Heart left ventricle (tissue), 16 donors: ENCODE measurements at regions of chr12 and their contacts with region 1.

Region 1: GRCh38 chr12:94074980-94075928 is 73.1 kb upstream of the PLXNC1 start:
- DNase-seq: peak in 4 of 5 donors; percentile 73 to 80 (median 77)
- ATAC-seq: peak; percentile 76 to 90 (median 84)
- H3K4me3 ChIP-seq: peak overlapping the region in 6 of 12 donors; percentile 4 to 36 (median 10)
- H3K27ac ChIP-seq: peak overlapping the region; percentile 74 to 96 (median 84)
- H3K4me1 ChIP-seq: peaks cover 0 to 36% (median 23%) of the 10 kb centered on the region in 12 donors
- H3K27me3 ChIP-seq: no peaks in the 10 kb centered on the region
- CTCF ChIP-seq: peak; percentile 59 to 88 (median 69)
- POLR2A ChIP-seq: no peak

Region 2: GRCh38 chr12:93064630-93065029 is 1010.6 kb before region 1 on chr12:
- intact Hi-C with region 1: no loop called
- DNase-seq: no peak
- ATAC-seq: no peak
- H3K4me3 ChIP-seq: no peak overlapping the region
- H3K27ac ChIP-seq: no peak overlapping the region
- H3K4me1 ChIP-seq: peaks cover 0 to 38% (median 23%) of the 10 kb centered on the region in 12 donors
- H3K27me3 ChIP-seq: no peaks in the 10 kb centered on the region
- CTCF ChIP-seq: no peak
- POLR2A ChIP-seq: no peak

Region 3: GRCh38 chr12:93677195-93678064 is 397.8 kb before region 1 on chr12 and contains the start of gene CRADD:
- intact Hi-C with region 1: loop called in 5 of 10 experiments (anchors 5 to 10 kb)
- DNase-seq: peak; percentile 79 to 90 (median 83)
- ATAC-seq: peak; percentile 86 to 94 (median 92)
- H3K4me3 ChIP-seq: peak within 1 kb of the TSS; percentile 36 to 84 (median 70)
- H3K27ac ChIP-seq: peak within 1 kb of the TSS; percentile 84 to 100 (median 97)
- H3K4me1 ChIP-seq: peaks cover 0 to 52% (median 24%) of the 10 kb centered on the region in 12 donors
- H3K27me3 ChIP-seq: no peaks in the 10 kb centered on the region
- CTCF ChIP-seq: no peak
- POLR2A ChIP-seq: peak in 1 of 2 donors; percentile 73
- total RNA-seq, gene CRADD: 40.1 to 100 (median 56.1) TPM

Region 4: DNA sequence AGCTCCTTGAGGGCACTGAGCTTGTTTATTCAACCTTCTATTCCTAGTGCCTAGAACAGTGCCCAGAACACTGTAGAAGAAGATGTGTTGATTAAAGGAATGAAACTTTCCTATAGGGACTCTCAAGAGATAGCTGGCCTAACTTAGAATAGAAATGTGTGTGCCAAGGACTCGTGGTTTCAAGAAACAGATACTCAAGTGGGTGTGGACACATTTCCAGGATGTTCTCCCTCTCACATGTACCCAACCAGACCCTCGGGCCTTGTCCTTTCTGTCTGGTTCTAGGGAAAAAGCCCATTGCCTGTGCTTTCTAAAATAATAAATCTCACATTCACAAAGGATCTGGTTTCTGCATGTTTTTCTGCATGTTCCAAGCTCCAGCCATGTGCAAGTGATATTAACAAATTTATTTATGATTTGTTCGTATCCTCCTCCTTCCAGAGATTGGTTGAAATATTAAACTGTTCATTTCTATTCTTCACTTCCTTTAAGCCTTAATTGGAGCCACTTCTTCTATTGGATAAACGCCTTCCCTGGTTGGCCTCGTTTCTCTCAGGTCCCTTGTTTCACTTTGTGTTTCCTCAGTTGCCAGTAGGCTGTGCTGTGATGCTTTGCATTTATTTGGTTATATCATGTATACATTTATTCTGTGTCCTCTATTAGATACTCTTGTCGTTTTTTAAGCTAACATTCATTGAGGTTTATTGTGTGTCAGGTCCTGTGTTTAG is 308.3 kb before region 1 on chr12:
- intact Hi-C with region 1: loop called in 7 of 10 experiments (anchors 2 to 10 kb)
- DNase-seq: peak in 4 of 5 donors; percentile 37 to 60 (median 50)
- ATAC-seq: peak; percentile 79 to 88 (median 82)
- H3K4me3 ChIP-seq: peak overlapping the region in 1 of 12 donors; percentile 5
- H3K27ac ChIP-seq: peak overlapping the region; percentile 27 to 72 (median 55)
- H3K4me1 ChIP-seq: peaks cover 0 to 56% (median 42%) of the 10 kb centered on the region in 12 donors
- H3K27me3 ChIP-seq: no peaks in the 10 kb centered on the region
- CTCF ChIP-seq: peak; percentile 38 to 81 (median 64)
- POLR2A ChIP-seq: no peak

Region 5: DNA sequence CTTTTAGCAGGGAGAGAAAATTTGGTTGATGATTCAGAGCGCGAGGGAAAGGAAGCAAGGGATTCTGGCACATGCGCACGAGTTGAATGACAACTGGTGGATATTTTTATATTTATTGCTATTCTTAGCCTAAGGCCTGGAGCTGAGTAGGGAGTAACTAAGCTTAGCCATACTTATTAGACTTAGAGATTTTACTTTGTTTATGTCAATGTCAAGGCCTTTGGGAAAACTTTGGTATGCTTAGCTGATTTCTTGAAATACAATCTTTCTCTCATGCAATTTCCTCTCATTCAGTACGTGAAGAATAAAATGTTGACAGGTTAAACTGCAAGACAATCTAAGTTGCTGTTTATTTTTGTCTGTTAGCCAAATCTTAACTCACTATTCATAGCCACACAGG is 296.9 kb before region 1 on chr12:
- intact Hi-C with region 1: loop called in 1 of 10 experiments (anchors 10 kb)
- DNase-seq: peak in 4 of 5 donors; percentile 66 to 80 (median 72)
- ATAC-seq: peak; percentile 83 to 92 (median 88)
- H3K4me3 ChIP-seq: peak overlapping the region in 5 of 12 donors; percentile 1 to 12 (median 9)
- H3K27ac ChIP-seq: peak overlapping the region; percentile 74 to 92 (median 84)
- H3K4me1 ChIP-seq: peaks cover 12 to 54% (median 45%) of the 10 kb centered on the region in 12 donors
- H3K27me3 ChIP-seq: no peaks in the 10 kb centered on the region
- CTCF ChIP-seq: no peak
- POLR2A ChIP-seq: no peak

Region 6: GRCh38 chr12:93813972-93814821 is 261.1 kb before region 1 on chr12:
- intact Hi-C with region 1: loop called in 2 of 10 experiments (anchors 10 kb)
- DNase-seq: peak; percentile 79 to 91 (median 80)
- ATAC-seq: peak; percentile 91 to 93 (median 92)
- H3K4me3 ChIP-seq: peak overlapping the region in 6 of 12 donors; percentile 6 to 37 (median 14)
- H3K27ac ChIP-seq: peak overlapping the region; percentile 81 to 95 (median 88)
- H3K4me1 ChIP-seq: peaks cover 9 to 68% (median 50%) of the 10 kb centered on the region in 12 donors
- H3K27me3 ChIP-seq: no peaks in the 10 kb centered on the region
- CTCF ChIP-seq: no peak
- POLR2A ChIP-seq: no peak

Region 7: DNA sequence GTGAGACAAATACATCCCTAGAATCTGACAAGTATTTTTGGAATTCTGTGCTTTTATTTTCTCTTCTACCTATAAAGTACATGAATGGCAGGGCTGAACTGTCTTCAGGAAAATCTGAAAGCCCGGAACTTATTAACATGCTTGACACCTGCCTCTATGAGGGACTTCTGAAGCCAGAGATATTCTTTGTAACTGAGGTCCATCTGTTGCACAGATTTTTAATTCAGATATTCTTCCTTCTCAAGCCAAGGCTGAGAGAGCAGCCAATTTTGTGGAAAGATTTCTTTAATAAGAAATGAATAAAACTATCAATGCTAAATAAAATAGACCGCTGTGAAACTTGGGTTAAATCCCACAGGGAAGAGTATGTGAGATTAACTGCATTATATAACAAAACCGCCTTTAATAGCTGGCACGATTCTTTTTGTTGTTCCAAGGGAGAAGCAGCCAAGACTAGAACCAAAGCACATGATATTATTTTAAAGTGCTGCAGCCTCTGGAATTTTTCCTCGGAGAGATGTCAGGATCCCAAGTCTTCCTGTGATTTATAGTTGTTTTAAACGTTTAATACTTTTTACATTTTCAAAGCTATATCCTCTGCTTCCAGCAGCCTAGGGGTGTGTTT is 249.2 kb before region 1 on chr12:
- intact Hi-C with region 1: loop called in 1 of 10 experiments (anchors 10 kb)
- DNase-seq: no peak
- ATAC-seq: peak in 1 of 4 donors; percentile 48
- H3K4me3 ChIP-seq: peak overlapping the region in 1 of 12 donors; percentile 5
- H3K27ac ChIP-seq: peak overlapping the region; percentile 17 to 73 (median 62)
- H3K4me1 ChIP-seq: peaks cover 0 to 72% (median 52%) of the 10 kb centered on the region in 12 donors
- H3K27me3 ChIP-seq: no peaks in the 10 kb centered on the region
- CTCF ChIP-seq: no peak
- POLR2A ChIP-seq: no peak

Region 8: GRCh38 chr12:93990832-93991803 is 84.1 kb before region 1 on chr12:
- intact Hi-C with region 1: loop called (anchors 2 to 10 kb)
- DNase-seq: peak in 4 of 5 donors; percentile 49 to 70 (median 59)
- ATAC-seq: peak; percentile 93 to 96 (median 94)
- H3K4me3 ChIP-seq: peak overlapping the region in 7 of 12 donors; percentile 11 to 34 (median 17)
- H3K27ac ChIP-seq: peak overlapping the region in 6 of 12 donors; percentile 22 to 61 (median 53)
- H3K4me1 ChIP-seq: peaks cover 0 to 16% (median 0%) of the 10 kb centered on the region in 12 donors
- H3K27me3 ChIP-seq: no peaks in the 10 kb centered on the region
- CTCF ChIP-seq: peak; percentile 18 to 68 (median 50)
- POLR2A ChIP-seq: no peak